CD8-positive, alpha-beta T cell (primary cell): ENCODE measurements at regions of chr4 and their contacts with region 1.

Region 1: DNA sequence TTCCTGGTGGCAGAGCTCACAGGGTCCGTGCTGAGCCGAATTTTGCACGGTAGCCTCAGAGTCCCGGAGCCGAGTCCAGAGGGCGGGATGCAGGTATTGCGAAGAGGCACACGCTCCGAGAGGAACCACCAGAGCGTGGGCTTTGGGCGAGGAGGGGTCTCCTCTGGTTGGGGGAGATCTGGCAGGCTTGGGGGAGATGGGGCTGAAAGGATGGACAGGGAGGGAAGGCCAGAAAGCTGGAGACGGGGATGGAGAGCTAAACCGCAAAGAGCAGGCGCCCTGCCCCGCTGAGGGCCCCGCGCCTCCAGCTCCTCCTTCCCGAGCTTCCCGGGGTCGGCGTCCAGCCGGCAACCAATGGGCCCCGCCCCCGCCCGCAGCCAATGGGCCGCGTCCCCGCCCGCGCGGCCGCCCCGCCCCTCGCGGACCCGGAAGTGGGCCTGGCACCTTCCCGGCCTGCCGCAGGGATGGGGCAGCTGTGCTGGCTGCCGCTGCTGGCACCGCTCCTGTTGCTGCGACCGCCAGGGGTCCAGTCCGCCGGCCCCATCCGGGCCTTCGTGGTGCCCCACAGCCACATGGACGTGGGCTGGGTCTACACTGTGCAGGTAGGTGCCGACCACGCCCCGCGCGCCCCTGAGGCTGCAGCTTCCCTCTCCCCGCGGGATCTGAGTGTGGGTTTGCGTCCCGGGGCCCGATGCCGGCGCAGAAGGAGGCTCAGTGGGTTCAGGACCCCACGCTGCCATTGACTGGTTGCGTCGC is at the start of gene MAN2B2:
- DNase-seq: peak; percentile 62 to 89 (median 82)
- ATAC-seq: peak; percentile 94
- H3K4me3 ChIP-seq: peak within 1 kb of the TSS; percentile 99
- H3K4me3 Mint-ChIP-seq: peak within 1 kb of the TSS; percentile 91
- H3K27ac ChIP-seq: peak within 1 kb of the TSS; percentile 80 to 85
- H3K27ac Mint-ChIP-seq: peak within 1 kb of the TSS; percentile 84
- H3K4me1 ChIP-seq: peaks cover 22% of the 10 kb centered on the region
- H3K4me1 Mint-ChIP-seq: peaks cover 21% of the 10 kb centered on the region
- H3K27me3 ChIP-seq: no peaks in the 10 kb centered on the region
- H3K27me3 Mint-ChIP-seq: no peaks in the 10 kb centered on the region
- CTCF ChIP-seq: no peak
- total RNA-seq, gene MAN2B2: 26.4 to 26.7 TPM

Region 2: DNA sequence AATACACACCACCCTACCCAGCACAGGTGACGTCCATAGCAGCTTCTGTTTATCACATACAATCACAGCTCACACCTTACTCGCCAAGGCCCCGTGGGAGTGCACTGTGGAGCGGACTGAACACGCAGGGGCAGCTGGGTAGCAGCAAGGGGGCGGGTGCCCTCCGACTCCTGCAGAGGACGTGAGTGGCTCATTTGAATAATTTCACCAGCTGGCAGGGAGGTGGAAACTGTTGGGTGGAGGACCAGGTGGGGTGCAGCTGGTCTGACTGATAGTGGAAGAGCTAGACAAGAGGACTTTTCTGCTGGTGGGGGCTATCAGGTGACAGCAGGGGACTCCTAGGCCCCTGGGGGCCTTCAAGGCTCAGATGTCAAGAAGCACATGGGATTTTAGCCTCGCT is 16.4 kb after region 1 on chr4:
- CTCF ChIA-PET with region 1: no interaction called
- POLR2A ChIA-PET with region 1: no interaction called
- intact Hi-C with region 1: no loop called
- DNase-seq: no peak
- ATAC-seq: no peak
- H3K4me3 ChIP-seq: no peak overlapping the region
- H3K4me3 Mint-ChIP-seq: no peak overlapping the region
- H3K27ac ChIP-seq: no peak overlapping the region
- H3K27ac Mint-ChIP-seq: no peak overlapping the region
- H3K4me1 ChIP-seq: no peaks in the 10 kb centered on the region
- H3K4me1 Mint-ChIP-seq: no peaks in the 10 kb centered on the region
- H3K27me3 ChIP-seq: no peaks in the 10 kb centered on the region
- H3K27me3 Mint-ChIP-seq: no peaks in the 10 kb centered on the region
- CTCF ChIP-seq: no peak

Region 3: DNA sequence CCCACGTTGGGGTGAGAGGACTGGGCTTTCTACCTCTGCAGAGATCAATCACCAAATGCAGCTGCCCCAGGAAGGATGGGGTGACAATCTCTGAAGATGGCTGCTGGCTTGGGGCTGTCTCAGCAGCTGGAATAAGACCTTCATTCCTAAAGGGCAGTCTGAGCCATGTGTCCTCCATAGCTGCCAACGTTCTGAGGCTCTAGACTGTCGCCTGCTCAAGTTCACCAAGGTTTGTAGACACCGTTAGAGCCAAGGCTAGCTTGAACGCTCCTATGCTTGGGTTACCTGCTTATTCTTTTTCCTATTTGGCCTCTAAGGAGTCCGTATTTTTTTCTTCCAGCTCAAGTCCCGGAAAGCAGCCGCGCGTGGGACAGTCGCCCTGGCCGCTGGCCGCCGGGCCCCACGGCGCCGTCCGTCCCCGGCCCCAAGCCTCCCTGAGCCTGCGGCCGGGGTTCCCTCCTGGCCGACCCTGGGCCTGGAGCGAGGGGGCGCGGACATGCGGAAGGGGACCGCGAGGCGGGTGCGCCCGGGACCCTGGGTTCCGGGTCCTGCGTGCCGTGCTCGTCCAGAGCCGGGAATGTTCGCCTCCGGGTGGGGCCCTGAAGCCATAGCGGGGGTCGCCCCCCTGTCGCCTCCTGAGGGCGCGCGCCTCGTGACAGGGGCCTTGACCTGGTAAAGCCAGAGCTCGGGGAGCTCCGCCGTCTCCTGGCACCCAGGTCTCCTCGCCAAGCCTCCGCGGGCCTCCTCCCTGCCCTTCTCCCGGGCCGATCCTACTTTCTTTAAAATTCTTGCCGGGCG is 88.9 kb after region 1 on chr4:
- CTCF ChIA-PET with region 1: no interaction called
- POLR2A ChIA-PET with region 1: no interaction called
- intact Hi-C with region 1: loop called in 1 of 2 experiments (anchors 5 kb)
- DNase-seq: no peak
- ATAC-seq: no peak
- H3K4me3 ChIP-seq: peak overlapping the region; percentile 29 to 42
- H3K4me3 Mint-ChIP-seq: peak overlapping the region; percentile 52
- H3K27ac ChIP-seq: no peak overlapping the region
- H3K27ac Mint-ChIP-seq: no peak overlapping the region
- H3K4me1 ChIP-seq: peaks cover 14% of the 10 kb centered on the region
- H3K4me1 Mint-ChIP-seq: peaks cover 8% of the 10 kb centered on the region
- H3K27me3 ChIP-seq: peaks cover 0 to 12% of the 10 kb centered on the region in 2 experiments
- H3K27me3 Mint-ChIP-seq: peaks cover 12% of the 10 kb centered on the region
- CTCF ChIP-seq: no peak

Region 4: GRCh38 chr4:6695660-6696630 is 121.0 kb after region 1 on chr4:
- CTCF ChIA-PET with region 1: no interaction called
- POLR2A ChIA-PET with region 1: no interaction called
- intact Hi-C with region 1: loop called in 1 of 2 experiments (anchors 10 kb)
- DNase-seq: peak in 8 of 9 experiments; percentile 46 to 86 (median 70)
- ATAC-seq: peak; percentile 88
- H3K4me3 ChIP-seq: peak overlapping the region in 1 of 2 experiments; percentile 10
- H3K4me3 Mint-ChIP-seq: peak overlapping the region; percentile 30
- H3K27ac ChIP-seq: peak overlapping the region; percentile 67 to 91
- H3K27ac Mint-ChIP-seq: peak overlapping the region; percentile 93
- H3K4me1 ChIP-seq: peaks cover 86% of the 10 kb centered on the region
- H3K4me1 Mint-ChIP-seq: peaks cover 76% of the 10 kb centered on the region
- H3K27me3 ChIP-seq: no peaks in the 10 kb centered on the region
- H3K27me3 Mint-ChIP-seq: no peaks in the 10 kb centered on the region
- CTCF ChIP-seq: no peak

Region 5: DNA sequence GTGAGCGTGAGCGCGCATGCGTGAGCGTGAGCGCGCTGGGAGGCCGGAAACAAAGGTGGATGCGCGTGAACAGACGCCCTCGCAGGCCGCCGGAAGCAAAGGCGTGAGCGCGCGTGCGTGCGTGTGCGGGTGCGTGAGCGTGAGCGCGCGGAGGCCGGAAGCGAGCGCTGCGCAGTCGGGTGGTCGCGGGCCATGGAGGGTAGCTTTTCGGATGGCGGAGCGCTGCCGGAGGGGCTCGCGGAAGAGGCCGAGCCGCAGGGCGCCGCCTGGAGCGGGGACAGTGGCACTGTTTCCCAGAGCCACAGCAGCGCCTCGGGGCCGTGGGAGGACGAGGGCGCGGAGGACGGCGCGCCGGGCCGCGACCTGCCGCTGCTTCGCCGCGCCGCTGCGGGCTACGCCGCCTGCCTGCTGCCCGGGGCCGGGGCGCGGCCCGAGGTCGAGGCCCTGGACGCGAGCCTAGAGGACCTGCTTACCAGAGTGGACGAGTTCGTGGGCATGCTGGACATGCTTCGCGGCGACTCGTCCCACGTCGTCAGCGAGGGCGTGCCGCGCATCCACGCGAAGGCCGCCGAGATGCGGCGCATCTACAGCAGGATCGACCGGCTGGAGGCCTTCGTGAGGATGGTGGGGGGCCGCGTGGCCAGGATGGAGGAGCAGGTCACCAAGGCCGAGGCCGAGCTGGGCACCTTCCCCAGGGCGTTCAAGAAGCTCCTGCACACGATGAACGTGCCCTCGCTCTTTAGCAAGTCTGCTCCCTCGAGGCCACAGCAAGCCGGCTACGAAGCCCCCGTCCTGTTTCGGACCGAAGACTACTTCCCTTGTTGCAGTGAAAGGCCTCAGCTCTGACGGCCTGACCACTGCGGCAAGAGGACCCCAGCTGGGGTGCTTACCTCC is 141.3 kb after region 1 on chr4 and contains the start of gene BLOC1S4:
- CTCF ChIA-PET with region 1: no interaction called
- POLR2A ChIA-PET with region 1: no interaction called
- intact Hi-C with region 1: loop called in 1 of 2 experiments (anchors 2 kb)
- DNase-seq: peak; percentile 77 to 98 (median 88)
- ATAC-seq: peak; percentile 83
- H3K4me3 ChIP-seq: peak within 1 kb of the TSS; percentile 74 to 81
- H3K4me3 Mint-ChIP-seq: peak within 1 kb of the TSS; percentile 95
- H3K27ac ChIP-seq: peak within 1 kb of the TSS; percentile 75 to 80
- H3K27ac Mint-ChIP-seq: peak within 1 kb of the TSS; percentile 97
- H3K4me1 ChIP-seq: peaks cover 25% of the 10 kb centered on the region
- H3K4me1 Mint-ChIP-seq: peaks cover 48% of the 10 kb centered on the region
- H3K27me3 ChIP-seq: no peaks in the 10 kb centered on the region
- H3K27me3 Mint-ChIP-seq: no peaks in the 10 kb centered on the region
- CTCF ChIP-seq: peak; percentile 18
- total RNA-seq, gene BLOC1S4: 29.7 to 30.7 TPM

Region 6: GRCh38 chr4:7101692-7102515 is 527.0 kb after region 1 on chr4:
- CTCF ChIA-PET with region 1: interaction called, 3 read pairs
- POLR2A ChIA-PET with region 1: no interaction called
- intact Hi-C with region 1: loop called in 1 of 2 experiments (anchors 5 kb)
- DNase-seq: peak in 7 of 9 experiments; percentile 23 to 66 (median 50)
- ATAC-seq: peak; percentile 39
- H3K4me3 ChIP-seq: peak overlapping the region; percentile 84 to 90
- H3K4me3 Mint-ChIP-seq: peak overlapping the region; percentile 91
- H3K27ac ChIP-seq: no peak overlapping the region
- H3K27ac Mint-ChIP-seq: peak overlapping the region; percentile 45
- H3K4me1 ChIP-seq: peaks cover 25% of the 10 kb centered on the region
- H3K4me1 Mint-ChIP-seq: peaks cover 16% of the 10 kb centered on the region
- H3K27me3 ChIP-seq: no peaks in the 10 kb centered on the region
- H3K27me3 Mint-ChIP-seq: no peaks in the 10 kb centered on the region
- CTCF ChIP-seq: peak; percentile 46